ENCODE measurements at regions of chr17 and their contacts with region 1.

Region 1: DNA sequence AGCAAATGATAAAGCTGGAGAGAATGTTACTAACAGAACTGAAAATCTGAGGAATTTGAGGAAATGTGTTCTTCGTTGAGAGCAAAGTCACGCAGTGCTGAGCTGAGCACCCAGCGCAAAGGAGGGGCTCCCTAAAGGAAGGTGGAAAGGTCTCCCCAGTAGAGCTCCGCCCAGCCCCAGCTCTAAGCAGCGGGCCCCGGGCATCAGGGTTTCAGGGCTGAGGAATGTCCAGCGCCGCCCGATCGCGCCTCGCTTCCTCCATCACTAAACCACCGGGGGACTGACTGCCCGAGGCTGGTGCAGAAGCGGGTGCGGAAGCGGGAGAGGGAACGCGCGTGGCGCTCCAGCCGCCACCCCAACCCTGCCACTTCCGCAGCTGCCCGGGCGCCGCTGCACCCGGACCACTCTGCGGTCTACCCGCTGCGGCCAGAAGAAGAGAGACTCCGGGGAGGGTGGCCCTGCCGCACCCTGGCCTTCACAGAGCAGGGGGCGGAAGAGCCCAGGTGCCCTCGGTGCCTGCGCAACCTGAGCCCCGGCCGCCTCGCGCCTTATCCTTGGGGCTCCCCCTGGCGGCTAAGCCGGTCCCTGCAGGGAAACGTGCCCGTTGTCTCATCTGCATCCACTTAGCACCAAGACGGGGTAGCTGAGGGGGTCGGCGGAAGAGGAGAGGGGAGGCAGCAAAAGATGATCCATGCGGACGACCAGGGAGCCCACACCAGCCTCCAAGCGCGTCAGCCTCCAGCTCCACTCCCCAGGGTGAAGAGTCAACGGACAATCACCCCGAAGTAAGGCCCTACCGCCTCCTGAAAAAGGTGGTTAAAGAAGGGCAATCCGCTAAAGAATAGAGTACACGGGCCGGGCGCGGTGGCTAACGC is 12.4 kb upstream of the GUCY2D start:
- DNase-seq: peak; percentile 91 to 93
- H3K4me3 ChIP-seq: peak overlapping the region; percentile 53 to 72 (median 60)
- H3K27ac ChIP-seq: peak overlapping the region; percentile 58 to 80 (median 66)
- H3K4me1 ChIP-seq: peaks cover 0 to 16% (median 13%) of the 10 kb centered on the region in 4 donors
- H3K27me3 ChIP-seq: peaks cover 0 to 16% (median 0%) of the 10 kb centered on the region in 3 donors
- CTCF ChIP-seq: peak in 6 of 7 experiments; percentile 86 to 97 (median 96)
- EP300 ChIP-seq: no peak
- POLR2A ChIP-seq: no peak

Region 2: DNA sequence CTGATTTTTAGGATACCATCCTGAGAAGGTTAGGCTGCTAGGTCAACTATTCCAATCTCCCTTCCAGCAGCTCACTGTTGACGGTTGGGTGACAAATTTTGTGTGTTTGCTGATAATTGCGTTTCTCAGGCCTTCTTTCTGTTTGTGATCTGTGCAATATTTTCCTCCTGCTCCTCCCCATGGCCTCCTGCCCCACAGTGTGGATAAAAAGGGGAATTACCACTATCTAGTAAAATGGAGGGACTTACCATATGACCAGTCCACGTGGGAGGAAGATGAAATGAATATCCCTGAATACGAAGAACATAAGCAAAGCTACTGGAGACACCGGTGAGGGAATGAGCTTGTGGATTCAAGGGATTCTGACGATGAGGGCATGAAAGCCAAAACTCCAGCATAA is 92.2 kb before region 1 on chr17:
- intact Hi-C with region 1: loop called (anchors 10 kb)
- DNase-seq: peak in 1 of 2 donors; percentile 73
- H3K4me3 ChIP-seq: no peak overlapping the region
- H3K27ac ChIP-seq: no peak overlapping the region
- H3K4me1 ChIP-seq: peaks cover 0 to 10% (median 0%) of the 10 kb centered on the region in 4 donors
- H3K27me3 ChIP-seq: no peaks in the 10 kb centered on the region
- CTCF ChIP-seq: peak in 4 of 7 experiments; percentile 7 to 62 (median 42)
- EP300 ChIP-seq: no peak
- POLR2A ChIP-seq: no peak